ENCODE measurements at regions of chr1 and their contacts with region 1.

Region 1: DNA sequence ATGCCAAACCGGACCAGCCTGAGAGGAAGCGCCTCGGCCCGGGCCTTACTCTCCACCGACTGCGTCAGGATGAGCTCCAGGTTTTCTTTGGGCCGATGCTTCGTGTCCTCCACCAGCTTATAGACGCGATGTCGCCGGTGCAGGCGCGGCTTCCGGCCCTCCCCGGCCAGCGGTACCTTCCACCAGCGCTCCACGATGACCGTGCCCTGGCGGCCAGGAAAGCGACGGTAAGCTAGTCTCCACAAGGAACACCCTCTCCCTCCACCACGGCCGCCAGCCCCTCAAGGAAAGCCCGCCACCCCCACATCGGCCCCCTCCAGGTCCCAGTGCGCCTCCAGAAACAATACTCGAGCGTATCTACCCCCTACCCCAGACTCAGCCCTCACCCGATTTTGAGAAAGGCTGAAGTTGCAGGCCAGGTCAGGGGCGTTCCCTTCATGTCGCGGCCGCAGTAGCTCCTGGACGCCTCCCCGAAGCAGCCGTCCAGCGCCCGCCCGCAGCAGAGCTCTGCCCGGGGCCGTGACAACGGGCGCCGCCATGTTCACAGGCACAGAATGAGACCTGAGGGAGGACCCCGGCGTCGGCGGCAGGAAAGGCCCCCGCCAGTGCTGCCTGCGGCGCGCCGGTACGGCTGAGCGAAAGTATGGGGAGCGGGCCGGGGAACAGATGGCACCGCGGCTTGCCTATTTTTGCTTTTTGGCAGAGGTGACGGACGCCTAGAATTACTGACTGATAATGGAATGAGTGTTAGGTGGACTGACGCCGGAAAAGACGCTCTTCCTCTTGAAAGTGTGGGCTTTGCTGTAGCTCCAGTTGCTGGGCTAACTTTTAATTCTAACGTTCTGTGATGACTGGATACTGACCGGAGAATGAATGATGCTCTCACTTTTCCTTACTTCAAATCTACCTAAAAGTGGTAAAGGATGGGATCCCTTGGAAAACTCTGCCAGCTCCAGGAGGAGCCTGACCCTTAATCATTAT is at the start of gene MRPL9:
- DNase-seq: peak; percentile 83
- H3K4me3 Mint-ChIP-seq: peak within 1 kb of the TSS; percentile 90
- H3K27ac Mint-ChIP-seq: peak within 1 kb of the TSS; percentile 95
- H3K4me1 Mint-ChIP-seq: peaks cover 27% of the 10 kb centered on the region
- H3K27me3 Mint-ChIP-seq: no peaks in the 10 kb centered on the region
- total RNA-seq, gene MRPL9: 141 and 159 TPM in 2 replicates

Region 2: DNA sequence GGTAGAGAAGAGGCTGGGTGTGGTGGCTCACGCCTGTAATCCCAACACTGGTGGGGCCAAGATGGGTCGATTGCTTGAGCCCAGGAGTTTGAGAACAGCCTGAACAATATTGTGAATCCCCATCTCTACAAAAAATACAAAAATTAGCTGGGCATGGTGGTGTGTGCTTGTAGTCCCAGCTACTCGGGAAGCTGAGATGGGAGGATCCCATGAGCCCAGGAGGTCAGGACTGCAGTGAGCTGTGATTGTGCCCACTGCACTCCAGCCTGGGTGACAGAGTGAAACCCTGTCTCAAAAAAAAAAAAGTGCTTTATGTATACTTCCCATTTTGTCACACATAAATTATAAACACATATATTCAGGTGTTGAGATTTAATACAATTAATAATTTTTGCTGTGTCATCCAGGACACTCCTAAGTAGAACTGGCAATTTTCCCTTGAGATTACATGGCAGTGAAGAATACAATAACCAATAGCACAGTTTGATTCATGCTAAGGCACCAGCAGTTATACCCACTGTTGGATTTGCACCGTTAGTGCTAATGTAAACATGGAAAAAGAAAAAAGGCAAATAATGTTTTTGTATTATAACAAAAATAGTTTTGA is 677.2 kb before region 1 on chr1:
- intact Hi-C with region 1: no loop called
- DNase-seq: no peak
- H3K4me3 Mint-ChIP-seq: no peak overlapping the region
- H3K27ac Mint-ChIP-seq: no peak overlapping the region
- H3K4me1 Mint-ChIP-seq: no peaks in the 10 kb centered on the region
- H3K27me3 Mint-ChIP-seq: no peaks in the 10 kb centered on the region

Region 3: DNA sequence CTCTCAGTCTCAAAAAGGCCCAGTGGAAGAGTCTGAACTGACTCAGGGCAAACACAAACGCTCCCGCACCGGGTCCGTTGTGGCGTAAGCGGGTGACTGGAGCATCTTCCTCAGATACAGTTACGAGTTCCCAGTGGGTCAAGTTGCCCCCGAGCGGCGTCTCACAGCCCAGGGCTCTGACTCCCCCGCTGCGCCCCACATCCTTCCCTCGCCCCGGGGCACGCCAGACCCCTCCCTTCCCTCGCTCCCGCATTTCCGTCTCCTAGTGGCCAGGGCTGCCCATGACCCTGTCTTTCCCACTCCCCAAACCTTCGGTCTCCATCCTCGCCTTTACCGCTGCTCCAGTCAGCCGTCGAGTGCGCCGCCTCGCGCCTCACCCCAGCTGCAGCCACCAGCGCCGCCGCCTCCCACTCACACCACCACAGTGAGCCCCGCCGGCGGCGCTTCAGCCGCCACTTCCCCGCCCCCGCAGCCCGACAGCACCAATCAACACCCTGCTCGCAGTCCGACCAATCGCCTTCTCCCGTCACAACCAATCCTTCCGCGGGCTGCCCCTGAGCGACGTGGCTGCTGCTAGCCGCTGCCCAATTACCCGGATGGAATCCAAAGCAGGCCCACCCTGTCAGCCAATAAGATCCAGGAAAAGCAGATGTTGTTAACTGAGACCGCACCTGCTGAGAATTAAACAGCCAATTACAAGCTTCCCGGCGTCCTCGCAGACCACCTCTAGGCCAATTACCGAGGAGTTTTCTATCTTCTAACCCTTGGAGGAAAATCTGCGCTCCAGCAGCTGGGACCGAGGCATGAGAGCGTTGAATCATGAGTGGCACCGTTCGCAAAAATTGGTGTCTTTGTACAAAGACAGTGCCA is 27.1 kb after region 1 on chr1 and contains the start of gene TDRKH:
- intact Hi-C with region 1: loop called (anchors 1 kb)
- DNase-seq: peak; percentile 99
- H3K4me3 Mint-ChIP-seq: peak within 1 kb of the TSS; percentile 99
- H3K27ac Mint-ChIP-seq: peak within 1 kb of the TSS; percentile 91
- H3K4me1 Mint-ChIP-seq: peaks cover 24% of the 10 kb centered on the region
- H3K27me3 Mint-ChIP-seq: peaks cover 1% of the 10 kb centered on the region
- total RNA-seq, gene TDRKH: 18.2 and 18.4 TPM in 2 replicates